Naive thymus-derived CD4-positive, alpha-beta T cell (primary cell): ENCODE measurements at regions of chr4 and their contacts with region 1.

Region 1: DNA sequence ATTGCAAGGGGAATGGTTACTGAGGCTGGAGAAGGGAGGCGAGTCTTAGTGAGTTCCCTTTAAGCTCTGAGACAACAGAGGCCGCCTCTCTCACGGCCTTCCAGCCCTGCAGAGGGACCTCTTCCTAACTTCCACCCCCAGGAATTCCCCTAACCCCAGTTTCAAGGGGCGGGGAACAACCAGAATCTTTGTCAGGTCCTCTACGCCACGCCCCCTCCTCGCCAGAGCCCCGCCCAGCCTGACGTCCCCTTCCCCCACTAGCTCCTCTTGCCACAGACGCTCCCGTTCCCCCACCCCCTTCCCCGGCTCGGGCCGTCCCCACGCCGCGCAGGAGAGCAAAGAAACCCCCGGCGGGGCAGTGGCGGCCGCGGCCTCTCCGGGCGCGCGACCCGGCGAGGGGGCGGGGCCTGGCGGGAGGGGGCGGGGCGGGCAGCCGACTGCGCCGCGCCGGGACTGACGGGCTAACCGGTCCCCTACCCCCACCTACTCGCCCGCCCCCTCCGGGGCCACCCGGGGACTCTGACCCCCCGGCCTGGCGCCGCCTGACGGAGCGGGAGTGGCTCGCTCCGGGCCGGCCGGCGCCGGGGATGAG is 12.3 kb upstream of the TMEM156 start:
- DNase-seq: peak; percentile 82 to 98 (median 89)
- ATAC-seq: peak; percentile 92
- H3K4me3 ChIP-seq: peak overlapping the region; percentile 68
- H3K4me3 Mint-ChIP-seq: peak overlapping the region; percentile 86 to 97 (median 91)
- H3K27ac ChIP-seq: peak overlapping the region; percentile 82
- H3K27ac Mint-ChIP-seq: peak overlapping the region; percentile 66 to 99 (median 93)
- H3K4me1 ChIP-seq: peaks cover 28 to 32% of the 10 kb centered on the region in 2 donors
- H3K4me1 Mint-ChIP-seq: peaks cover 17 to 63% (median 55%) of the 10 kb centered on the region in 7 donors
- H3K27me3 ChIP-seq: no peaks in the 10 kb centered on the region
- H3K27me3 Mint-ChIP-seq: no peaks in the 10 kb centered on the region

Region 2: DNA sequence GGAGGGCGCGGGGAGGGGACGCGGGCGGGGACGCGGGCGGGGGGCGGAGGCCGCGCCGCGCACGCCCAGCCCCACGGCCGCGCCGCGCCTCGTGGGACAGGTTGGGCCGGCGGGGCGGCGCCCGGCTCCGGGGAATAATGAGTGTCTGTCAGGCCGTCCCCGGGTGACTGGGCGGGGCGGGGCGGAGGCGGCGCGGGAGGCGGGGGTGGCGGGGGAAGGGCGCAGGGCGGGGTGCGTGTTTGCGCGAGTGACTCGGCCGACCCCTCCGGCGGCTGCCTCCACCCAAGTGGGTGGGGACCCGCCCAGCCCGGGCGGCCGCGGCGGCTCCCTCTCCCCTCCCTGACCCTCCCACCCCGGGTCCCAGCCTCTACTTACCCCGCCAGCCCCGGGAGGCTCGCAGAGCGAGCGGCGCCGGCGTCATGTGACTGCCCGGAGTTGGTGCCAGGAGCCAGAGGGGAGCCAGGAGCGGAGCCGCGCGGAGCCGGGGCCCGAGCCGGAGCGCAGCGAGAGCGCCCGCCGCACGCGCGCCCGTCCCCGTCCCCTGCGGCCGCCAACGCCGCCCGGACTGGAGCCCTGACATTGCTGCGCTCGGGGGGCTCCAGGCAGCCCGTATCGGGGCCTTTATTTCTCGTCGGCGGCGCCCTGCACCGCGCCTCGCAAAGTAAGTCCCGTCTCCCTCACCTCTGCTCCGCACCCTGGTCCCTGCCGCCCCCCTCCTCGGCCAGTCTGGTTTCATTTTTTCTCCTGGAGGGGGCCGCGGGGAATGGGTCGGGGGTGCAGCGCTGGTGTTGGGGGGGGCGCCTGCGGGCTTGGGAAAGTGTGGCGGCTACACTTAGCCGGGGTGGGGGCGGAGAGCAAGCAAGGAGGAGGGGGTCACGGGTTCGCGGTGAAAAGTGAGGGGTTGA is 380.4 kb before region 1 on chr4 and contains the start of gene KLF3:
- CTCF ChIA-PET with region 1: no interaction called
- POLR2A ChIA-PET with region 1: no interaction called
- intact Hi-C with region 1: no loop called
- DNase-seq: peak in 7 of 9 donors; percentile 91 to 95 (median 93)
- ATAC-seq: peak; percentile 86
- H3K4me3 ChIP-seq: peak within 1 kb of the TSS; percentile 64
- H3K4me3 Mint-ChIP-seq: peak within 1 kb of the TSS; percentile 85 to 100 (median 99)
- H3K27ac ChIP-seq: peak within 1 kb of the TSS; percentile 98
- H3K27ac Mint-ChIP-seq: peak within 1 kb of the TSS; percentile 85 to 100 (median 95)
- H3K4me1 ChIP-seq: peaks cover 33 to 50% of the 10 kb centered on the region in 2 donors
- H3K4me1 Mint-ChIP-seq: peaks cover 40 to 57% (median 53%) of the 10 kb centered on the region in 7 donors
- H3K27me3 ChIP-seq: no peaks in the 10 kb centered on the region
- H3K27me3 Mint-ChIP-seq: peaks cover 0 to 63% (median 0%) of the 10 kb centered on the region in 5 donors
- total RNA-seq, gene KLF3: 21.0 to 142 (median 132) TPM

Region 3: GRCh38 chr4:38759113-38759789 is 285.2 kb before region 1 on chr4:
- CTCF ChIA-PET with region 1: interaction called, 3 read pairs
- POLR2A ChIA-PET with region 1: no interaction called
- intact Hi-C with region 1: loop called in 1 of 2 experiments (anchors 5 kb)
- DNase-seq: peak; percentile 29 to 66 (median 58)
- ATAC-seq: peak; percentile 64
- H3K4me3 ChIP-seq: no peak overlapping the region
- H3K4me3 Mint-ChIP-seq: no peak overlapping the region
- H3K27ac ChIP-seq: no peak overlapping the region
- H3K27ac Mint-ChIP-seq: peak overlapping the region in 2 of 9 donors; percentile 10 to 41
- H3K4me1 ChIP-seq: peaks cover 0 to 5% of the 10 kb centered on the region in 2 donors
- H3K4me1 Mint-ChIP-seq: peaks cover 8 to 31% (median 19%) of the 10 kb centered on the region in 7 donors
- H3K27me3 ChIP-seq: no peaks in the 10 kb centered on the region
- H3K27me3 Mint-ChIP-seq: no peaks in the 10 kb centered on the region

Region 4: GRCh38 chr4:38902695-38903094 is 141.8 kb before region 1 on chr4:
- CTCF ChIA-PET with region 1: interaction called, 5 read pairs
- POLR2A ChIA-PET with region 1: interaction called, 4 read pairs
- intact Hi-C with region 1: loop called (anchors 1 to 5 kb)
- DNase-seq: peak in 6 of 9 donors; percentile 27 to 60 (median 49)
- ATAC-seq: peak; percentile 84
- H3K4me3 ChIP-seq: no peak overlapping the region
- H3K4me3 Mint-ChIP-seq: no peak overlapping the region
- H3K27ac ChIP-seq: no peak overlapping the region
- H3K27ac Mint-ChIP-seq: peak overlapping the region in 1 of 9 donors; percentile 36
- H3K4me1 ChIP-seq: no peaks in the 10 kb centered on the region
- H3K4me1 Mint-ChIP-seq: peaks cover 0 to 12% (median 0%) of the 10 kb centered on the region in 7 donors
- H3K27me3 ChIP-seq: no peaks in the 10 kb centered on the region
- H3K27me3 Mint-ChIP-seq: peaks cover 0 to 9% (median 0%) of the 10 kb centered on the region in 5 donors

Region 5: DNA sequence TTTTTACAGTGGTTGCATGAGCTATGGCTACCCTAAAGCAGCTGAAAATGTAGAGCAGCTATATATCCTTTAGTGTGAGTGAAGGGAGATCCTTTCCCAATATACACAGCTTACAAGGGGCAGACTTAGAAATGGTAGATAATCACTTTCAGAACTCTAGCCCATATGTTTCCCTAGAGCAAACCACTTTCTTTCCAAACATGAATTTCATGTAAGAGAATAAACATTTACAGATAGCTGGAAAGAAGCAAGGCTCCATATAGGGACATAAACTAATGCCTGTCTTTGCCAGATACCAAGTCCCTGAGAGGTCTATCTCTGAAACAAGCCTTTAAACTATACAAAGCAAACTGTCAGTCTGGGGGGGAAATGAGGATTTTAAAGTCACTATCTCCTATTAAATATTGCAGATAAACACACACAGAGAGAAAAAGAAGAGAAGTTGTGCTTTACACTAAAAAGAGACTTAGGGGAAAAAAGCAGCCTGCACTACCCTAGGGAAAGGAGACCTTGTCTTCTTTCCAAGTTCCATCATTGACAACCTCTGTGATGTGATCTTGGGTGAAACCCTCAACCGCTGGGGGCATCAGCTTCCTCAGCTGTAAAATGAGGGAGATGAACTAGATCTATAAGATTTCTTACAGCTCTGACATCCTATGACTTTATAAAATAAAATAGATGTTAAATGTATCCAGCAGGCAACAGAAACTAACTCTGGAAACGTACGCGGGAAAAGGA is 85.8 kb before region 1 on chr4:
- CTCF ChIA-PET with region 1: no interaction called
- POLR2A ChIA-PET with region 1: no interaction called
- intact Hi-C with region 1: loop called in 1 of 2 experiments (anchors 2 kb)
- DNase-seq: peak in 1 of 9 donors; percentile 19
- ATAC-seq: no peak
- H3K4me3 ChIP-seq: no peak overlapping the region
- H3K4me3 Mint-ChIP-seq: peak overlapping the region in 2 of 10 donors; percentile 25 to 65
- H3K27ac ChIP-seq: no peak overlapping the region
- H3K27ac Mint-ChIP-seq: peak overlapping the region in 2 of 9 donors; percentile 93 to 98
- H3K4me1 ChIP-seq: no peaks in the 10 kb centered on the region
- H3K4me1 Mint-ChIP-seq: peaks cover 2 to 49% (median 6%) of the 10 kb centered on the region in 7 donors
- H3K27me3 ChIP-seq: no peaks in the 10 kb centered on the region
- H3K27me3 Mint-ChIP-seq: peaks cover 0 to 3% (median 2%) of the 10 kb centered on the region in 5 donors

Region 6: DNA sequence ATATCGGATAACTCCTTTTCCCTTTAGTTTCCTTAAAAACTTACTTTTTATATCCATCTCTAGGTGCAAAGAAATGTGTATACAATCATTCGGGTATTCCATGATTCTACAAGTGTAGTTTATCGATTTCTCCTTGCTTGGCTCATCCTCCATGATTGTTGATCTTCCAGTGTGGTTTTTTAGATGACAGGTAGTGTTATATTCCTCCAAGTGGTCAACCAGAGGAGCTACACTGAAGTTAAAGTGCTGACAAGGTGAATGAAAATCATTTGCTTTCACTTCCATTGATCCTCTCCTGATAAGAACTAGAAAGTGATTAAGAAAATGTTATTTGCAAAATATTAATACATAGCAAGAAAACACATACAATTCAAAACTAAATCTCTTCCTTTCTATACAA is 50.8 kb before region 1 on chr4:
- CTCF ChIA-PET with region 1: no interaction called
- POLR2A ChIA-PET with region 1: no interaction called
- intact Hi-C with region 1: loop called in 1 of 2 experiments (anchors 2 kb)
- DNase-seq: no peak
- ATAC-seq: no peak
- H3K4me3 ChIP-seq: no peak overlapping the region
- H3K4me3 Mint-ChIP-seq: no peak overlapping the region
- H3K27ac ChIP-seq: no peak overlapping the region
- H3K27ac Mint-ChIP-seq: peak overlapping the region in 1 of 9 donors; percentile 4
- H3K4me1 ChIP-seq: no peaks in the 10 kb centered on the region
- H3K4me1 Mint-ChIP-seq: peaks cover 0 to 31% (median 0%) of the 10 kb centered on the region in 7 donors
- H3K27me3 ChIP-seq: no peaks in the 10 kb centered on the region
- H3K27me3 Mint-ChIP-seq: no peaks in the 10 kb centered on the region

Region 7: GRCh38 chr4:39061457-39061856 is 17.0 kb after region 1 on chr4:
- CTCF ChIA-PET with region 1: interaction called, 4 read pairs
- POLR2A ChIA-PET with region 1: interaction called, 5 read pairs
- intact Hi-C with region 1: loop called (anchors 2 kb)
- DNase-seq: no peak
- ATAC-seq: no peak
- H3K4me3 ChIP-seq: no peak overlapping the region
- H3K4me3 Mint-ChIP-seq: no peak overlapping the region
- H3K27ac ChIP-seq: no peak overlapping the region
- H3K27ac Mint-ChIP-seq: peak overlapping the region in 1 of 9 donors; percentile 46
- H3K4me1 ChIP-seq: peaks cover 0 to 5% of the 10 kb centered on the region in 2 donors
- H3K4me1 Mint-ChIP-seq: peaks cover 8 to 40% (median 33%) of the 10 kb centered on the region in 7 donors
- H3K27me3 ChIP-seq: no peaks in the 10 kb centered on the region
- H3K27me3 Mint-ChIP-seq: no peaks in the 10 kb centered on the region

Region 8: DNA sequence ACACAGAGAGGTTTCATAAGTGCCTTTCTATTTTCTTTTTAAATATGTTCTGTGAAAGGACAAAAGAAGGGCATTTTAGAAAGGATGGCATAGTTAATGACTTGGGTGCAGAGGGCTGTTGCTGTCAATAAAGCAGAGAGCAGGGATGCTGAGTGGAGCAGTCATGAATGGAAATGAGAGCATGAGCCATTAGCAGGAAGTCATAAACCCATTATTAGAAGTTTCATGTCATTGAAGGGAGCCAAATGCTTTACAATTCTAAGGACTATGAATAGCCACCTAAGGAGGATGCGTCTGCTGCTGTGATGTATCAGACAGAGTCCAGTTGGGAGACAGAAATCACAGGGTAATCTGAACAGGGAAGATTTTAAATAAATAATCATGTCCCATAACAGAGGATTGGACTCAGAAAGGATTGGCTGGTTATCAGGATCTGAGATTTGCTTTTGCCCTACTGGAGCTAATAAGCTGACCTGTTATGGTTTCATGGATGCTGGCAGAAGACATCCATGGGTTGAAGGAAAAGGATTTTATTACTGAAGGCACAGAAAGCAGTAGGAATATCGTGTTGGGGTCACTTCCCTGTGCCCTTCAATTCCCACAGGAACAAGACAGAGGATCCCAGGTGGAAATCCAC is 90.3 kb after region 1 on chr4:
- CTCF ChIA-PET with region 1: no interaction called
- POLR2A ChIA-PET with region 1: interaction called, 3 read pairs
- intact Hi-C with region 1: loop called (anchors 1 to 2 kb)
- DNase-seq: peak in 1 of 9 donors; percentile 2
- ATAC-seq: no peak
- H3K4me3 ChIP-seq: no peak overlapping the region
- H3K4me3 Mint-ChIP-seq: no peak overlapping the region
- H3K27ac ChIP-seq: no peak overlapping the region
- H3K27ac Mint-ChIP-seq: peak overlapping the region in 1 of 9 donors; percentile 37
- H3K4me1 ChIP-seq: peaks cover 0 to 3% of the 10 kb centered on the region in 2 donors
- H3K4me1 Mint-ChIP-seq: peaks cover 1 to 18% (median 12%) of the 10 kb centered on the region in 7 donors
- H3K27me3 ChIP-seq: no peaks in the 10 kb centered on the region
- H3K27me3 Mint-ChIP-seq: no peaks in the 10 kb centered on the region

Region 9: DNA sequence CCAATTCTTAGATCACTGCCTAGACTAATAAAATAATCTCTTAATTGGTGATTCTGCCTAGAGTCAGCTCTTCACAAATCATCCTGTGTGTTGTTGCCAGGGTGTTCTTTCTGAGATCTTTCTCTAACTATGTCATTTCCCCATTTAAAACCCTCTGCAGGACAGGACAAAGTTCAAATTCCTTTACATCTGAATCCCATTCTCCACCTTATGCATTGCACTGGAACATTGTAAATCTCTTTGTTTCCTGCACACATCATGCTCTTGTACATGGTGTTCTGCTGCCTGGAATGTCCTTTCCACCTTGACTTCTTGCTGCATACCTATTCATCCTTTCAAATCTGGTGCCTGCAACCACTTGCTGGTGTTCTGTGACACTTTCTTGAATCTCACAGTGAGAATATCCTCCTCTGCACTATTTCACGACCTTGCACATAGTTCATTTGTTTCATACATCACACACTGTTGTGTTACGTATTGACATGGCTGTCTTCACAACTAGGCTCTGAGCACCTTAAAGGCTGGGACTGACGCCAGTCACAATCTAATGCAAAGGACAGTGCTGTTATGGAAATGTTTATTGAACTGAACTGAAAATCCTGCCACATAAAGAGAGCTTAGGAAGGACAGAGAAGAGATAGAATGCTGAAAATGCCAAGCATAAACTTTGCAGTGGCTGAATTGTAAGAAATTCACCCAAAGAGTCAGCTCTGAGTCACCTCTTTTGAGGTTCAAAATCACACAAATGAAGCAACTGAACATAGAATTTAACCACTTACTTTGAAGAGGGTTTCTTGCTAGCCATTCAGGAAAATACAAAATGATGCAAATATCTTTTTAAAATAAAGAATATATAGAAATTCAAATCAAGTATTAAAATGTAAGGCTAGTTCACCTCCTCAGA is 620.6 kb after region 1 on chr4:
- CTCF ChIA-PET with region 1: no interaction called
- POLR2A ChIA-PET with region 1: no interaction called
- intact Hi-C with region 1: no loop called
- DNase-seq: no peak
- ATAC-seq: no peak
- H3K4me3 ChIP-seq: no peak overlapping the region
- H3K4me3 Mint-ChIP-seq: no peak overlapping the region
- H3K27ac ChIP-seq: no peak overlapping the region
- H3K27ac Mint-ChIP-seq: no peak overlapping the region
- H3K4me1 ChIP-seq: no peaks in the 10 kb centered on the region
- H3K4me1 Mint-ChIP-seq: no peaks in the 10 kb centered on the region
- H3K27me3 ChIP-seq: no peaks in the 10 kb centered on the region
- H3K27me3 Mint-ChIP-seq: peaks cover 0 to 3% (median 0%) of the 10 kb centered on the region in 5 donors